Natural killer cell (primary cell): ENCODE measurements at regions of chr15 and their contacts with region 1.

Region 1: GRCh38 chr15:40367686-40368611 is 9.9 kb downstream of the DISP2 start:
- DNase-seq: peak; percentile 85 to 95
- ATAC-seq: peak; percentile 96 to 98 (median 97)
- H3K4me3 ChIP-seq: peak overlapping the region; percentile 64
- H3K4me3 Mint-ChIP-seq: peak overlapping the region; percentile 91
- H3K27ac ChIP-seq: peak overlapping the region; percentile 68
- H3K27ac Mint-ChIP-seq: peak overlapping the region; percentile 84 to 91
- H3K4me1 ChIP-seq: peaks cover 31% of the 10 kb centered on the region
- H3K4me1 Mint-ChIP-seq: peaks cover 18 to 33% of the 10 kb centered on the region in 2 donors
- H3K27me3 ChIP-seq: no peaks in the 10 kb centered on the region
- H3K27me3 Mint-ChIP-seq: no peaks in the 10 kb centered on the region
- CTCF ChIP-seq: peak; percentile 94

Region 2: GRCh38 chr15:40357723-40358470 is 10.1 kb before region 1 on chr15 and contains the start of gene DISP2:
- intact Hi-C with region 1: loop called (anchors 1 kb)
- DNase-seq: peak; percentile 88 to 94
- ATAC-seq: peak; percentile 87 to 94 (median 93)
- H3K4me3 ChIP-seq: peak within 1 kb of the TSS; percentile 54
- H3K4me3 Mint-ChIP-seq: peak within 1 kb of the TSS; percentile 85
- H3K27ac ChIP-seq: no peak within 1 kb of the TSS
- H3K27ac Mint-ChIP-seq: peak within 1 kb of the TSS; percentile 23 to 75
- H3K4me1 ChIP-seq: peaks cover 18% of the 10 kb centered on the region
- H3K4me1 Mint-ChIP-seq: peaks cover 11 to 27% of the 10 kb centered on the region in 2 donors
- H3K27me3 ChIP-seq: no peaks in the 10 kb centered on the region
- H3K27me3 Mint-ChIP-seq: peaks cover 0 to 9% of the 10 kb centered on the region in 2 donors
- CTCF ChIP-seq: no peak
- total RNA-seq, gene DISP2: 0.20 to 1.0 (median 0.26) TPM